Naive thymus-derived CD4-positive, alpha-beta T cell (primary cell): ENCODE measurements at regions of chr1 and their contacts with region 1.

Region 1: GRCh38 chr1:165697881-165698760 is at the start of gene ALDH9A1:
- DNase-seq: peak; percentile 73 to 89 (median 89)
- ATAC-seq: peak; percentile 93
- H3K4me3 ChIP-seq: peak within 1 kb of the TSS; percentile 96
- H3K4me3 Mint-ChIP-seq: peak within 1 kb of the TSS; percentile 95 to 100 (median 99)
- H3K27ac ChIP-seq: peak within 1 kb of the TSS; percentile 91
- H3K27ac Mint-ChIP-seq: peak within 1 kb of the TSS; percentile 95 to 99 (median 98)
- H3K4me1 ChIP-seq: peaks cover 14 to 18% of the 10 kb centered on the region in 2 donors
- H3K4me1 Mint-ChIP-seq: peaks cover 15 to 42% (median 35%) of the 10 kb centered on the region in 7 donors
- H3K27me3 ChIP-seq: no peaks in the 10 kb centered on the region
- H3K27me3 Mint-ChIP-seq: peaks cover 0 to 2% (median 0%) of the 10 kb centered on the region in 5 donors
- total RNA-seq, gene ALDH9A1: 25.0 to 46.0 (median 40.5) TPM

Region 2: GRCh38 chr1:165630629-165631341 is 67.3 kb before region 1 on chr1 and contains the start of gene MGST3:
- CTCF ChIA-PET with region 1: no interaction called
- POLR2A ChIA-PET with region 1: interaction called, 13 read pairs
- intact Hi-C with region 1: loop called (anchors 1 kb)
- DNase-seq: peak; percentile 91 to 96 (median 93)
- ATAC-seq: peak; percentile 98
- H3K4me3 ChIP-seq: peak within 1 kb of the TSS; percentile 91
- H3K4me3 Mint-ChIP-seq: no peak within 1 kb of the TSS
- H3K27ac ChIP-seq: peak within 1 kb of the TSS; percentile 78
- H3K27ac Mint-ChIP-seq: peak within 1 kb of the TSS in 1 of 9 donors; percentile 89
- H3K4me1 ChIP-seq: peaks cover 16 to 18% of the 10 kb centered on the region in 2 donors
- H3K4me1 Mint-ChIP-seq: peaks cover 5 to 27% (median 20%) of the 10 kb centered on the region in 7 donors
- H3K27me3 ChIP-seq: no peaks in the 10 kb centered on the region
- H3K27me3 Mint-ChIP-seq: peaks cover 0 to 16% (median 0%) of the 10 kb centered on the region in 5 donors
- total RNA-seq, gene MGST3: 21.4 to 59.4 (median 48.3) TPM

Region 3: GRCh38 chr1:165686121-165686970 is 11.8 kb before region 1 on chr1:
- CTCF ChIA-PET with region 1: interaction called, 3 read pairs
- POLR2A ChIA-PET with region 1: interaction called, 11 read pairs
- intact Hi-C with region 1: no loop called
- DNase-seq: no peak
- ATAC-seq: peak; percentile 36
- H3K4me3 ChIP-seq: no peak overlapping the region
- H3K4me3 Mint-ChIP-seq: peak overlapping the region in 8 of 10 donors; percentile 3 to 59 (median 34)
- H3K27ac ChIP-seq: no peak overlapping the region
- H3K27ac Mint-ChIP-seq: peak overlapping the region; percentile 20 to 85 (median 64)
- H3K4me1 ChIP-seq: peaks cover 0 to 10% of the 10 kb centered on the region in 2 donors
- H3K4me1 Mint-ChIP-seq: peaks cover 28 to 69% (median 53%) of the 10 kb centered on the region in 7 donors
- H3K27me3 ChIP-seq: no peaks in the 10 kb centered on the region
- H3K27me3 Mint-ChIP-seq: no peaks in the 10 kb centered on the region

Region 4: DNA sequence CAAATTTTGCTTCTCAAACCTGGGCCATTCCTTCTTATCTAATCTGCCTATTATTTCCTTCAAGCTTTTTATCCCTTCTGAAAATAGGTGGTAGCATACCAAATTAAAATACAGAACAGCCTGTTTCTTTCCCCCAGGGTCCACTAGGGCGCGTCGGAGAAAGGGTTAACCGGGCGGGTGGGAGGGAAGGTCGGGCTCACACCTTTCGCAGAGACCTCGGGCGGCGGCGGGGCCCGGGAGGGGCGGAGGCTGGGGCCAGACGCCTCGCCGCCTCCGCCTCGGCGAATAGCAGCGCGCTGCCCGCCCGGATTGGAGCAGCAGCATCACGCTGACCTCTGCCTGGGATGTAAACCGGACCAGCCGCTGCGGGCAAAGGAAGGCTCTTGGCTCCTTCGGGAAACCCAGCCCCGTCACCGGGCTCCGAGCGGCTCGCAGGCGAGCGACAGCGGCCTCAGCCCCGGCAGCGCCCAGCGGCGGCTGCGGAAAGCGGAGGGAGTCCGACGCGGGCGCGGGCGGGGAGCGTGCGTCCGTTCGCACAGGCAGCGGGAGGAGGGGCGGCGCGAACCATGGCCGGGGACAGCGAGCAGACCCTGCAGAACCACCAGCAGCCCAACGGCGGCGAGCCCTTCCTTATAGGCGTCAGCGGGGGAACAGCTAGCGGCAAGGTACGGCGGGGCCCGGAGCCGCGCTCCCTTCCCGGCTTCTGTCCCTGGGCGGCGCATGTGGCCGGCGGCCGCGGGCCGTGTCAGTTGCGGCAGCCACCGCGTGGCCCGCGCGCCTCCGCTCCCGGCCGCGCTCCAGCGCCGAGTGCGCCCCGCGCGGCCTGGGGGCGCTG is 129.4 kb after region 1 on chr1 and contains the start of gene UCK2:
- CTCF ChIA-PET with region 1: no interaction called
- POLR2A ChIA-PET with region 1: no interaction called
- intact Hi-C with region 1: loop called in 1 of 2 experiments (anchors 1 kb)
- DNase-seq: peak in 7 of 9 donors; percentile 14 to 77 (median 27)
- ATAC-seq: peak; percentile 81
- H3K4me3 ChIP-seq: peak within 1 kb of the TSS; percentile 77
- H3K4me3 Mint-ChIP-seq: peak within 1 kb of the TSS; percentile 85 to 95 (median 92)
- H3K27ac ChIP-seq: peak within 1 kb of the TSS; percentile 42
- H3K27ac Mint-ChIP-seq: peak within 1 kb of the TSS in 7 of 9 donors; percentile 2 to 85 (median 60)
- H3K4me1 ChIP-seq: peaks cover 9 to 12% of the 10 kb centered on the region in 2 donors
- H3K4me1 Mint-ChIP-seq: peaks cover 0 to 27% (median 19%) of the 10 kb centered on the region in 7 donors
- H3K27me3 ChIP-seq: no peaks in the 10 kb centered on the region
- H3K27me3 Mint-ChIP-seq: peaks cover under 1 to 23% (median 9%) of the 10 kb centered on the region in 5 donors
- total RNA-seq, gene UCK2: 0.89 to 32.7 (median 1.2) TPM

Region 5: DNA sequence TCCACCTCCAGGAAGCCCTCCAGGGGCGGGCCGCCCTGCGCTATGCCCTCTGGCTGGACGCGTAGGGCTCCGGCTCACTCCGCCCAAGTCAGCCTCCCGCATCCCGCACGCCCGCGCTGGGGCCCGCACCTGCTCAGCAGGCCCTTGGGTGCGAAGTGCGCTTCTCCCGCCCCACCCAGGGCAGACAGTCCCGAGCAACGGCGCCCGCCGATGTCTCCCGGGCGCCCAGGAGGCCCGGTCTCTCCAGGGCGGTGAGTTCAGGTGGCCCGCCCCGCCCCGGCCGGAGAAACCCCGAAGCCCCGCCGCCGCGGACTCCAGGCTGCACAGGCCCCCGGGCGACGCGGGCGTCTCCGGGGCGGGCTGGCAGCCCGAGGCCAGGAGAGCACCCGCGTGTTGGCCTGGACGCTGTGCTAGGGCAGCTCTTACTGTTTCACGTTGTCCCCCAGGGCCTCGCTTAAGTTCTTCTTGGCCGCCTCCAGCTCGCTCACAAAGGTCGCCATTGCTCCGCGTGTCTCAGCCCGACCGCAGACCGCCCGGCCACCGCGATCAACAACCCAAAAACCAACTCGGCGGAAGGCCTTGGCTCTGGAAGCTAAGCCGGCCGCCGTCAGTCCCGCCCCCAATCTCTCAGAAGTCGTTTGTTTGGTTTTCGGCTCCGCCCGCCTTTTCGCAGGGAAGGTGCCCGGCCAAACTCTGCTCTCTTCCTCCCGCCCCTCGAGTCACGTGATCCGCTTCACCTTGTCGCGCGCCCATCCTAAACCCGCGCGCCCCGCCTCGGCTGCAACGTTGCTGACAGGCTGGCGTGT is 1177.8 kb after region 1 on chr1 and contains the start of gene TADA1:
- CTCF ChIA-PET with region 1: no interaction called
- POLR2A ChIA-PET with region 1: no interaction called
- intact Hi-C with region 1: loop called in 1 of 2 experiments (anchors 5 kb)
- DNase-seq: peak; percentile 87 to 97 (median 96)
- ATAC-seq: peak; percentile 95
- H3K4me3 ChIP-seq: peak within 1 kb of the TSS; percentile 64
- H3K4me3 Mint-ChIP-seq: peak within 1 kb of the TSS; percentile 93 to 100 (median 96)
- H3K27ac ChIP-seq: peak within 1 kb of the TSS; percentile 83
- H3K27ac Mint-ChIP-seq: peak within 1 kb of the TSS; percentile 75 to 99 (median 98)
- H3K4me1 ChIP-seq: peaks cover 10 to 12% of the 10 kb centered on the region in 2 donors
- H3K4me1 Mint-ChIP-seq: peaks cover 43 to 63% (median 55%) of the 10 kb centered on the region in 7 donors
- H3K27me3 ChIP-seq: no peaks in the 10 kb centered on the region
- H3K27me3 Mint-ChIP-seq: peaks cover 0 to 11% (median 0%) of the 10 kb centered on the region in 5 donors
- total RNA-seq, gene TADA1: 9.4 to 16.2 (median 15.6) TPM